ENCODE measurements at regions of chr1 and their contacts with region 1.

Region 1: GRCh38 chr1:88736639-88737248 is 52.7 kb downstream of the PKN2 start:
- DNase-seq: peak; percentile 61
- ATAC-seq: peak; percentile 92
- H3K4me3 Mint-ChIP-seq: no peak overlapping the region
- H3K27ac Mint-ChIP-seq: peak overlapping the region; percentile 57; the same call in 1 of the 2 replicates
- H3K4me1 Mint-ChIP-seq: peaks cover 29% of the 10 kb centered on the region
- H3K27me3 Mint-ChIP-seq: no peaks in the 10 kb centered on the region
- CTCF ChIP-seq: peak; percentile 30; the same call in 1 of the 2 replicates

Region 2: GRCh38 chr1:88876573-88877365 is 140.0 kb after region 1 on chr1:
- CTCF ChIA-PET with region 1: interaction called, 12 read pairs
- POLR2A ChIA-PET with region 1: no interaction called
- DNase-seq: no peak
- ATAC-seq: no peak
- H3K4me3 Mint-ChIP-seq: no peak overlapping the region
- H3K27ac Mint-ChIP-seq: no peak overlapping the region
- H3K4me1 Mint-ChIP-seq: no peaks in the 10 kb centered on the region
- H3K27me3 Mint-ChIP-seq: no peaks in the 10 kb centered on the region
- CTCF ChIP-seq: no peak